ENCODE measurements at regions of chr17 and their contacts with region 1.

Region 1: GRCh38 chr17:2025622-2026310 is 632 bp upstream of the RTN4RL1 start:
- DNase-seq: peak; percentile 58 to 59 (median 59)
- H3K4me3 ChIP-seq: peak overlapping the region; percentile 11 to 75 (median 54)
- H3K27ac ChIP-seq: no peak overlapping the region
- H3K4me1 ChIP-seq: peaks cover under 1 to 54% (median 49%) of the 10 kb centered on the region in 4 experiments
- H3K27me3 ChIP-seq: peaks cover 9 to 54% (median 18%) of the 10 kb centered on the region in 5 experiments

Region 2: DNA sequence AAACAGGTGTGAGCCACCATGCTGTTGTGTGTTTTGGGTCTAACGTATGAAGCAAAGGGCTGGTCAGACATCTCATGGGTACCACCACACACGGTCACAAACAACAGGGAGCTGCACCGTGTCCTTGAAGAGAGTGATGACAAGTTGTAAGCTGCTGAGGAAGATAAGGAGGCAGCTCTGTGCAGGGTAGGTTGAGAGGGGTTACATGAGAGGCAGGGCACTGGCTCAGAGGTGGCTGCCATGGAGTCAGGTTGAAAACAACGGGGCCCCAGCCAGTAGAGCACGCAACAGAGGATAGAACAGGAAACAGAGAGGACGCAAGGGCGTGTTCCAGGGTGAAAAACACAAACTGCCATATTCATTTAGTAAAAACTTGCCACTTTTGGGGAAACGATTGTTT is 694.1 kb before region 1 on chr17:
- CTCF ChIA-PET with region 1: no interaction called
- POLR2A ChIA-PET with region 1: no interaction called
- DNase-seq: peak; percentile 47 to 95 (median 87)
- H3K4me3 ChIP-seq: no peak overlapping the region
- H3K27ac ChIP-seq: no peak overlapping the region
- H3K4me1 ChIP-seq: peaks cover 0 to 8% (median under 1%) of the 10 kb centered on the region in 4 experiments
- H3K27me3 ChIP-seq: peaks cover 0 to 6% (median 2%) of the 10 kb centered on the region in 5 experiments

Region 3: DNA sequence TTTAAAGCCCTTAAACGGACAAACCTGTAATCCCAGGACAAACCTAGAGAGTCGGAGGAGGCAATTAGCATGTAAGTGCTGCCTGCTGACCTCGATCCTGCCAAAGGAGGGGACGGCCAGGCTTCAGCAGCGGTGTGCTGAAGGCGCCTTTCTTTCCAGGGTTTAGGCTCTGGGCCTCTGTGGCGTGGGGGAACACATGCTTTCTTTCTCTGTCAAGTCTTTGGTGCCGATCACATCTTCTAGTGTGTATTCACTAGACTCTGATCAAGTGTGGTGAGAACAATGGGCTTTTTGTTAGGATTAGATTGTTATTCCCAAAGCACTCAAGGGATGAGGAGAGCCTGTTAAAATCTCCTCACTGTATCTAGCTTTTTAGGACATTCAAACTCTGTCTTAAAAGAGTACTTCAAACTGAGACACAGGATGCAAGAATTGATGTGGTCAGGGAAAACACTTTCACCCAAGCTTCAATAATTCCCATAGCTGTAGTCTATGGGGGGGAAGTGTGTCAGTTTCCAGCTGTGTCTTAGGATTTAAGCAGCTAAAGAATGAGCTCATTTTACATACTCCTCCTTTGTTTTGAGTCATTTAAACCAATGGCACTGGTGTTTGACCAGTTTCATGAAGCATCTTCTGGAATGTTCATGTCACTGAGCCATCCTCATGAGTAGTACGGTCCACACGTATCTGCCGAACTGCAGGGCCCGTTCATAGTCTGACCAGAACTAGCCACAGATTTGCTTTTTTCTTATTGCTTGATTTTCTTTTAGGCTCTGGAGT is 144.7 kb before region 1 on chr17:
- CTCF ChIA-PET with region 1: interaction called, 12 read pairs
- POLR2A ChIA-PET with region 1: no interaction called
- DNase-seq: no peak
- H3K4me3 ChIP-seq: no peak overlapping the region
- H3K27ac ChIP-seq: no peak overlapping the region
- H3K4me1 ChIP-seq: no peaks in the 10 kb centered on the region
- H3K27me3 ChIP-seq: no peaks in the 10 kb centered on the region

Region 4: DNA sequence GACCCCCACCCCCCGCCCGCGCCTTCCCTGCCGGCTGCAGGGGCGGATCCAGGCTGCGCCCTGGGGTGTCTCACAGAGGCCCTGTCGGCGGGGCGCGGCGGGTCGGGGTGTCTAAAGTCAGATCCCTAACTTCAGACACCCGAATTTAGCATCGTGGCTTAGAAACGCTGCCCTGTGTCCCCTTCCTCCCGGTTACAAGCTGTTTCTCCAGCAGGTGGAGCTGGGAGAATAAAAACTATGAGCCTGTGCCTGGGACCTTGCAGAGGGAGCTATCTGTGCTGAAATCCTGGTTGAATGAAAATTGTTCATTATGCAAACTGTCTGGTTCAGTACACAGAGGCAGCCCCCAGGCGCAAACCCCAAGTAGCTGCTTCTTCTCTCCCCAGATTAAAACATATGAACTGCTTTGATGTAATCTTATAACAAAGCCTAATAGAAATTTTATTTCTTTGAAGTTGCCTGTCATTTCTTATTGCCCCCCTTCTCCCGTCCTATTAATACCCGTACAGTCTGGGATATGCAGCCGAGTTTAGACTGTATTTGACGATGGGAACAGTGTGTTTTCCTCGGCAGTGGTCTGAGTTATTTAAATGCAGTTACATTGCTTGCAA is 117.0 kb before region 1 on chr17:
- CTCF ChIA-PET with region 1: interaction called, 25 read pairs
- POLR2A ChIA-PET with region 1: no interaction called
- DNase-seq: peak; percentile 70 to 76 (median 74)
- H3K4me3 ChIP-seq: peak overlapping the region in 6 of 7 experiments; percentile 19 to 79 (median 52)
- H3K27ac ChIP-seq: no peak overlapping the region
- H3K4me1 ChIP-seq: peaks cover 6 to 17% (median 11%) of the 10 kb centered on the region in 4 experiments
- H3K27me3 ChIP-seq: peaks cover 4 to 69% (median 39%) of the 10 kb centered on the region in 5 experiments